Heart left ventricle (tissue), 16 donors: ENCODE measurements at regions of chr9 and their contacts with region 1.

Region 1: GRCh38 chr9:90102292-90102901 is 497.6 kb downstream of the GADD45G start:
- DNase-seq: peak; percentile 78 to 88 (median 80)
- ATAC-seq: peak; percentile 58 to 89 (median 83)
- H3K4me3 ChIP-seq: no peak overlapping the region
- H3K27ac ChIP-seq: no peak overlapping the region
- H3K4me1 ChIP-seq: peaks cover 0 to 29% (median 10%) of the 10 kb centered on the region in 12 donors
- H3K27me3 ChIP-seq: no peaks in the 10 kb centered on the region
- CTCF ChIP-seq: peak; percentile 58 to 83 (median 78)
- POLR2A ChIP-seq: no peak

Region 2: DNA sequence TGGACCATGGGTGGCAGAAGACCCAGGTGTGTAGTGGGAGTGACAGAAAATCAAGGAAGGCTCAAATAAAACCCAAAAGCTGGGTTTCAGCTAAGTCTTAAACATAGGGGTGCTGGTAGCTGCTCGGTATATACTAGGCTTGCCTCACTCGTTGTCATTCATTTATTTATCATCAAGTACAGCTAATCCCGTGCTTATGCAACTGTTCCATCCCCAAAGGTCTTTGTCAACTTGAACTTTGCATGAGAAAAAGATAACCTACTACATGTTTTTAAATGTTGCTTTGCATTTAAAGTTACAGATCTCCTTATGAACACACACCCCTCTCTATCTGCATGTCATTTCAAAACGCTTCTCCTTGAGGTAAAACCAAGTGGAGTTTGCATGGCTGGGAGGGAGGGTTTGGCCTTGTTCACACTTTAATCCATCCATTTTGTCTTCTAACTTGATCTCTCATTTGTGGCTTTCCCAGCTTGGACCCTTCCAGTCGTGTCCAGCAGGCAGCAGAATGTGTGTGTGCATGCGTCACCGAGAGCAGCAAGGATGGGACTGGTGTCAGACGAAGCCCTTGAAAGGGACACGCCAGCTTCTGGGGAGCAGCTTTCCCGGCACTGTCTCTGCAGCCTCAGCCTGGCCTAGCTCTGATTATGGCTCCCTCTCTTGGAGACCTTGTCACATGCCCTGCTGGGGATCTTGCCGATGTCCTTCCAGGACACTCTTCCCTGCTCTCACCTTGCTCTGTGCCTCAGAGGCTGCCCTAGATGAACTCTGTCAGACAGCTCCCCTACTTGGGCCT is 364.1 kb before region 1 on chr9:
- intact Hi-C with region 1: loop called in 1 of 10 experiments (anchors 5 kb)
- DNase-seq: no peak
- ATAC-seq: peak; percentile 40 to 62 (median 46)
- H3K4me3 ChIP-seq: no peak overlapping the region
- H3K27ac ChIP-seq: no peak overlapping the region
- H3K4me1 ChIP-seq: peaks cover 0 to 31% (median under 1%) of the 10 kb centered on the region in 12 donors
- H3K27me3 ChIP-seq: no peaks in the 10 kb centered on the region
- CTCF ChIP-seq: peak in 5 of 12 donors; percentile 11 to 20 (median 13)
- POLR2A ChIP-seq: no peak

Region 3: GRCh38 chr9:89755821-89756220 is 346.6 kb before region 1 on chr9:
- intact Hi-C with region 1: loop called in 3 of 10 experiments (anchors 5 to 10 kb)
- DNase-seq: peak in 4 of 5 donors; percentile 43 to 78 (median 57)
- ATAC-seq: peak; percentile 27 to 78 (median 68)
- H3K4me3 ChIP-seq: no peak overlapping the region
- H3K27ac ChIP-seq: no peak overlapping the region
- H3K4me1 ChIP-seq: peaks cover 0 to 22% (median 8%) of the 10 kb centered on the region in 12 donors
- H3K27me3 ChIP-seq: no peaks in the 10 kb centered on the region
- CTCF ChIP-seq: no peak
- POLR2A ChIP-seq: no peak

Region 4: DNA sequence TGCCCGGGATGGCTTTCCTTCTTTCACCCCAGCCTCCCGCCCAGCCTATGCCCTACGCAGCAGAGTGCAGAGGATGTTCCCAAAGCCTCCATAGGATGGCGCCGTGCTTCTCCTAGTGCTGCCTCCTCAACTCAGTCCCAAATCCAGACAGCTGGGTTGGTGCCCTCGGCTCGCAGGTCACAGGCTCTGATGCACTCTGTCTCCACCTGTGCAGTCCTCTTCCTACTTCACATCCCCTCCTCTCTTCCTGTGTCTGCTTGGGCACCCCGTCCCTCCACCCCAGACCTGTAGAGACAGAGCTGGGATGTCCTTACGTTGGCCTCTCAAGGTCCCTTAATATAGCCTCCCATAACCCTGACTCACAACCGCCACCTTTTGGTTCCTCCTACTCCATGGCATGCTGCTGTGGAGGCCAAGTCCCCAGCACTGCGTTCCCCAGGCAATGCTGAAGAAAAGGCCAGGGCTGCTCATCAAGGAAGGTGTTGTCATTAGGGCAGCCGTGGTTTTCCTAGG is 183.2 kb before region 1 on chr9:
- intact Hi-C with region 1: loop called in 7 of 10 experiments (anchors 5 to 10 kb)
- DNase-seq: peak in 4 of 5 donors; percentile 50 to 63 (median 58)
- ATAC-seq: peak; percentile 93 to 96 (median 94)
- H3K4me3 ChIP-seq: no peak overlapping the region
- H3K27ac ChIP-seq: no peak overlapping the region
- H3K4me1 ChIP-seq: peaks cover 0 to 12% (median 0%) of the 10 kb centered on the region in 12 donors
- H3K27me3 ChIP-seq: no peaks in the 10 kb centered on the region
- CTCF ChIP-seq: peak in 11 of 12 donors; percentile 25 to 68 (median 48)
- POLR2A ChIP-seq: no peak

Region 5: DNA sequence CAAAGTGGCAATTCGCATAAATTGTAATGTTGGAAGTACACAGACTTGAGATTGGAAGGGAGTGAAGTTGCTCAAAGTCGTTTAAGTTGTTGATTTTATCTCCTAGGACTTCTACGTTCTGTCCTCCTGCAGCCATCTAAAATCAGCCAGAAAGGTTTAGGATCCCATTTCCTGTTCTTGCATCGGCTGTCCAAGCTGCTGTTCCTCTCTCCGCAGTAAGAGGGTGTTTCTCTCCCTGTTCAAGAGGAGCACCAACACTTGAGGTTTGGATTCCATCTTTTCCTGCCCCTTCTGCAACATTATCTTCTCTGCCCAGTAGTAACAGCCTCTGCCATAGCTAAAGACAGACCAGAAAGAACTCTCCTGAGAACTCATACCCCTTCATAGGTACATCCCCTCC is 124.2 kb before region 1 on chr9:
- intact Hi-C with region 1: loop called in 2 of 10 experiments (anchors 5 to 10 kb)
- DNase-seq: no peak
- ATAC-seq: peak in 2 of 4 donors; percentile 11 to 46
- H3K4me3 ChIP-seq: no peak overlapping the region
- H3K27ac ChIP-seq: no peak overlapping the region
- H3K4me1 ChIP-seq: peaks cover 0 to 8% (median 0%) of the 10 kb centered on the region in 12 donors
- H3K27me3 ChIP-seq: peaks cover 0 to 4% (median 0%) of the 10 kb centered on the region in 9 donors
- CTCF ChIP-seq: peak in 10 of 12 donors; percentile 14 to 55 (median 36)
- POLR2A ChIP-seq: no peak

Region 6: DNA sequence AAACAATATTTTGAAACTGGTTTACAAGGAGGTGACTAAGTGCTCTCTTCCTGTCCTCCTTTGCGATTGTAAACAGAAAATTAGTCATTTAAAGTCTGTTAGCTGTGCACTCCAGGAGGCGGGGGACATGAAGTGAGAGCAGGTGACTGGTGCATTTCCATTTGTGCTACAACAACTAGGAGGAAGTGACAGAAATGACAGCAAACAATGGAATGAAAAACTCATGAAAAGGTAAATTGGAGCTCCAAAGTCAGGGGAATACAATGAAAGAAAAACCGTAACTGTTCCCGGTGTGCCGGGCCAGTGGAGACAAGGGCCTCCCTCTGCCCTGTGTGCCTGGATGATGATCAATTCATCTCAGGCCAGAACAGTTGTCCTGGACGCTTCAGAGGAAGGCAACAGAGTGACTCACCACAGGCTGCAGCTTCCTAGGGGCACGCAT is 57.7 kb before region 1 on chr9:
- intact Hi-C with region 1: no loop called
- DNase-seq: no peak
- ATAC-seq: no peak
- H3K4me3 ChIP-seq: no peak overlapping the region
- H3K27ac ChIP-seq: no peak overlapping the region
- H3K4me1 ChIP-seq: no peaks in the 10 kb centered on the region
- H3K27me3 ChIP-seq: no peaks in the 10 kb centered on the region
- CTCF ChIP-seq: no peak
- POLR2A ChIP-seq: no peak

Region 7: GRCh38 chr9:90064971-90065370 is 37.4 kb before region 1 on chr9:
- intact Hi-C with region 1: no loop called
- DNase-seq: no peak
- ATAC-seq: no peak
- H3K4me3 ChIP-seq: no peak overlapping the region
- H3K27ac ChIP-seq: no peak overlapping the region
- H3K4me1 ChIP-seq: peaks cover 0 to 2% (median 0%) of the 10 kb centered on the region in 12 donors
- H3K27me3 ChIP-seq: peaks cover 0 to 1% (median 0%) of the 10 kb centered on the region in 9 donors
- CTCF ChIP-seq: no peak
- POLR2A ChIP-seq: no peak